Cardiac septum (tissue), 1 donor: ENCODE measurements at regions of chr1 and their contacts with region 1.

Region 1: DNA sequence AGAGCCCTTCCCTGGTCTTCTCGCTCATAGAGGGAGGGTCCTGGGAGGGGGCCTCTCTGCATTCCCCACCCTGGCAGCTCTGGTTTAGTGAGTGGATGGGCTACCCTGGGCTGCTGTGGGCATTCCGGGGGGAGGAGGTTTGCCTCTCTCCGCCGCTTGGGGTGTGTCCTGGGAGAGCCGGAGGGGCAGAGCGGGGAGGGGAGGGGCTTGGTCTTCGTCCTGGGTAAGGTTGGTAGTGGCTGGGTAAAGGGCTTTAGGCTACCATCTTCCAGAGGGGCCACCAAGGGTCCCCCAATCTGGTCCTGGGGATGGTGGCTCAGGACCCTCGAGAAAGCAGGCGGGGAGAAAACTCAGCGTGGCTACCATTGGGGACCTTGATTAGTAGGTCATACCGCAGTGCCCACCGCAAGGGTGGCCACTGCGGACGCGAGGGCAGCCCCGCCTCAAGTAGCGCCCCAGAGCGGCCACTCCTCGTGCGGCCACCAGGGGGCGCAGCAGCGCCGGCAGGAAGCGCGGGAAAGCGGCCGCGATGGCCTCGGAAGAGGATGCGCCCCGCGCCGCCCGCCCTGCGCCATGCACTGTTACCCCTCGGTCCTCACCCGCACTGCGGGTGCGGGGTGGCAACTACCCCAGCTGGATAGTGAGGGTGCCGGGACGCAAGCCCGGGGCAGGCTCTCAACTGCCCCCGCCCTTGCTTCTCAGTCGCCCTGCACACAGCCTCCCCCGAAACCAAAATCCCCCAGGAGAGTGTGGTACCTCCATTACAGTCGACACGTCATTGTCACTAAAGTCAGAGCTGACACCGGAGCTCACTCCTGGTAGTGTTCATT is 44.1 kb upstream of the SLC25A33 start:
- DNase-seq: no peak

Region 2: GRCh38 chr1:9110669-9111356 is 384.3 kb before region 1 on chr1:
- intact Hi-C with region 1: loop called (anchors 5 kb)
- DNase-seq: peak; percentile 93

Region 3: GRCh38 chr1:9269078-9269501 is 226.1 kb before region 1 on chr1:
- intact Hi-C with region 1: loop called (anchors 2 kb)
- DNase-seq: no peak

Region 4: DNA sequence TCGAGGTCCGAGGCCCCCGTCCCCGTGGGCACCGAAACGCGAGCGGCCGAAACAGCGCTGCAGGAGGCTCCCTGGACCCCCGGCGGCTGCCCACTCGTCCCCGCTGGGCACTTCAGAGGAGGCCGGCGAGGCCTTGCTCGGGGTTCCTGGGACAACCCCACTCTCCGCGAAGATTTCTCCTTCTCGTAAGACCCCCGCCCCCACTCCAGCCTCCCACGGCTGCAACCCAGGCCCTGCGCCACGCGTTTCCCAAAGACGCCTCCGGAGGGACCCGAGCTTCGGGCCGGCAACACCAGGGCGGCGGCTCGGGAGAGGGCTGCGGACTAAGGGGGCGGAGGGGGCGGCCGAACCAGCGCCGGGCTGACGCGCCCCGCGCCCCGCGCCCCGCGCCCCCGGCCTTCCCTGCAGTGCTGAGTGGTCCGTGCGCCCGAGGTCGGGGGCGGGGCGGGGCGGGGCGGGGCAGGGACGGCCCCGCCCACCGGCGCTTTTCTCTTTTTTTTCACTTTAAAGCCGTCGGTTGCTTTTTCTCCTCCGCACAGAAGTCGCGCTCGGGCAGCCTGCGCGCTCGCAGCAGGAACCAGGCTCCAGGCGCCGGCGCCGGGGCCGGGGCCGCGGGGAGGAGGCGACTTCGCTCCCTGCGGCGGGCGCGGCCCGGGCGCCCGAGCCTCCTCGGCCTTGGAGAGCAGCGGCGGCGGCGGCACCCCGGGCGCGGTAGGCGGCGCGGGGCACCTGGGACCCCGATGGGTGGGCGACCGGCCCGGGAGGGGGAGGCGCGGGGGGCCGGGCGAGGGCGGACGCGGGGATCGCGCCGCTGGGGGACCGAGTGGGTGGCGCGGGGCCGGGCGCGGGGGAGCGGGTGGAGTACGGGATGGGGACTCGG is 202.5 kb before region 1 on chr1 and contains the start of gene SPSB1:
- intact Hi-C with region 1: loop called (anchors 1 kb)
- DNase-seq: peak; percentile 88
- total RNA-seq, gene SPSB1: 12.9 TPM

Region 5: GRCh38 chr1:9428601-9429341 is 66.4 kb before region 1 on chr1:
- intact Hi-C with region 1: no loop called
- DNase-seq: peak; percentile 99

Region 6: GRCh38 chr1:9529190-9529589 is 34.0 kb after region 1 on chr1:
- intact Hi-C with region 1: no loop called
- DNase-seq: no peak

Region 7: GRCh38 chr1:9573723-9574122 is 78.6 kb after region 1 on chr1:
- intact Hi-C with region 1: loop called (anchors 1 kb)
- DNase-seq: no peak